ENCODE measurements at regions of chr5 and their contacts with region 1.

Region 1: GRCh38 chr5:64595031-64595855 is 89.4 kb downstream of the RGS7BP start:
- DNase-seq: peak; percentile 19
- H3K4me3 ChIP-seq: no peak overlapping the region
- H3K27ac ChIP-seq: no peak overlapping the region
- H3K4me1 ChIP-seq: no peaks in the 10 kb centered on the region
- H3K27me3 ChIP-seq: peaks cover 0 to 6% of the 10 kb centered on the region in 2 experiments
- CTCF ChIP-seq: peak; percentile 30 to 62
- POLR2A ChIP-seq: no peak

Region 2: DNA sequence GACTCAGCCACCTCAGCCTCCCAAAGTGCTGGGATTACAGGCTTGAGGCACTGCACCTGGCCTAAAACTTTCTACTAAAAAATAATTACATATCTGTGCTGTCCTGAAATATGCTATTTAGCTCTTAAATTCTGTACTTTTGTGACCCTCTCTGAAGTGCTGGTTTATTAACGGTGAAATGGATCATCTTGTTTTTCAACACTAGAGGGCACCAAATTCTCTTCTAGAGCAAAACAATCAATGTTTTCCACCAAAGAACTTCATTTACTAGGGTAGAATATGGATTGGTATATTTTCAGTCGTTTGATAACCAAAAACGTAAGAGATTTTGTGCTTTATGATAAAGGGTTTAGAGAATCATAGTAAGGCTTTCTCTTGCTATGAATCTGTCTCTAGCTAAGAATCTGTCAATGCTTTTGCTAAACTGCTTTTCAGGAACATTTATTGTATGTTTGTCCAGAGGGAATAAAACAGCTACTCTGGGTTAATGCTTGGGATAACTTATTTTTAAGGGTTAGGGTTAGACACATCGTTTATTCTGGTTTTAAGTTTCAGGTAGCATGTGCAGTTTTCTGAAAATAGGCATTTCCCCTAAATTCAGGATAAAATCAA is 366.0 kb before region 1 on chr5:
- CTCF ChIA-PET with region 1: interaction called, 12 read pairs
- POLR2A ChIA-PET with region 1: no interaction called
- dilution Hi-C with region 1: no loop called
- intact Hi-C with region 1: no loop called
- DNase-seq: peak; percentile 49
- H3K4me3 ChIP-seq: no peak overlapping the region
- H3K27ac ChIP-seq: no peak overlapping the region
- H3K4me1 ChIP-seq: no peaks in the 10 kb centered on the region
- H3K27me3 ChIP-seq: no peaks in the 10 kb centered on the region
- CTCF ChIP-seq: peak; percentile 24 to 41
- POLR2A ChIP-seq: no peak

Region 3: DNA sequence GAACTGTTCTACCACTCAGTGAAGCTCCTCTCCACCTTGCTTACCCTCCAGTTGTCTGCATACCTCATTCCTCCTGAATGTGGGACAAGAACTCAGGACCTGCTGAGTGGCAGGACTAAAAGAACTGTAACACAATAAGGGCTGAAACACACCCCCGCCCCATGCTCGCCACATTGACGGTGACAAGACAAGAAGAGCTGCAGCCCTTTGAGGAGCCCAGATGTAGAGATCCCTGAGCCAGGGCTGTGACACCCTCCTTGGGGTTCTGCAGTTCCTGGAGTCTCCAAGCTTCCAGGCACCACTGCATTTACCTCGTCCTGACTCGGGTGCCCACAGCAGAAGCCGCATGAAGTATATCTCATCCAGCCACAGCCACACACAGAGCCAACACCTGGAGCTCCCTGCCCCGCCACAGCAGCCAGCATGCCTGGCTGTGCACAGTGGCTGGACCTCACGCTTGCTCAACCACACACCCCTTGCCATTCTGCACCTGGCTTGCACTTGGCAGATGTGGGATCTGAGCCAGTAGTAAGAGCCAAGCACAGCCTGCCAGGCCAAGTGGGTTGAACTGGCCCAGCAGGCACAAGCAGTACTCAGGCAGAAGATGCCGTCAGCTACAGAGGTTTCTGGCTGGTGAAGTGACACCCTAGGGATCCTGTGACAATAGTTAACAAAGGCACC is 263.5 kb before region 1 on chr5:
- CTCF ChIA-PET with region 1: no interaction called
- POLR2A ChIA-PET with region 1: no interaction called
- dilution Hi-C with region 1: no loop called
- intact Hi-C with region 1: no loop called
- DNase-seq: no peak
- H3K4me3 ChIP-seq: no peak overlapping the region
- H3K27ac ChIP-seq: no peak overlapping the region
- H3K4me1 ChIP-seq: no peaks in the 10 kb centered on the region
- H3K27me3 ChIP-seq: no peaks in the 10 kb centered on the region
- CTCF ChIP-seq: no peak
- POLR2A ChIP-seq: no peak

Region 4: GRCh38 chr5:64347309-64347708 is 247.9 kb before region 1 on chr5:
- CTCF ChIA-PET with region 1: interaction called, 13 read pairs
- POLR2A ChIA-PET with region 1: no interaction called
- dilution Hi-C with region 1: no loop called
- intact Hi-C with region 1: no loop called
- DNase-seq: peak; percentile 14
- H3K4me3 ChIP-seq: no peak overlapping the region
- H3K27ac ChIP-seq: no peak overlapping the region
- H3K4me1 ChIP-seq: no peaks in the 10 kb centered on the region
- H3K27me3 ChIP-seq: no peaks in the 10 kb centered on the region
- CTCF ChIP-seq: no peak
- POLR2A ChIP-seq: no peak

Region 5: GRCh38 chr5:64384761-64385160 is 210.5 kb before region 1 on chr5:
- CTCF ChIA-PET with region 1: interaction called, 4 read pairs
- POLR2A ChIA-PET with region 1: no interaction called
- dilution Hi-C with region 1: no loop called
- intact Hi-C with region 1: loop called (anchors 5 kb)
- DNase-seq: peak; percentile 55
- H3K4me3 ChIP-seq: no peak overlapping the region
- H3K27ac ChIP-seq: no peak overlapping the region
- H3K4me1 ChIP-seq: no peaks in the 10 kb centered on the region
- H3K27me3 ChIP-seq: no peaks in the 10 kb centered on the region
- CTCF ChIP-seq: peak; percentile 29 to 41
- POLR2A ChIP-seq: no peak

Region 6: DNA sequence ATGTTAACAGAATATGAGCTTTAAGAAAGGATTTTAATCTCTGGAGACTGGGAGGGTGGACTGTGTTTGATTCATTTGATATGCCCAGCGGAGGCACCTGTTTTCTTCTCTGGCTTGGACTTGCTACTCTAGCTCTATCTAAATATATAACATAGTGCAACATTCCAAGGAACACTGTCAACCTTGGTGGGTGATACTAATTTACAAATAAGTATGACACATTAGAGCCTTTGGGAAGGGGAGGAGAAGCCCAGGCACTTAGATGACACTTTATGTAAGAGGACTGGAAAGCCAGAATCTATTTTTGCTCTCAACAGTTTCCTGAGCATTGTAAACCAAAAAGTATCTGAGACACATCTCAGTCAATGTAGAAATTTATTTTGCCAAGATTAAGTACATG is 11.7 kb after region 1 on chr5:
- CTCF ChIA-PET with region 1: interaction called, 18 read pairs
- POLR2A ChIA-PET with region 1: no interaction called
- dilution Hi-C with region 1: no loop called
- intact Hi-C with region 1: no loop called
- DNase-seq: no peak
- H3K4me3 ChIP-seq: no peak overlapping the region
- H3K27ac ChIP-seq: no peak overlapping the region
- H3K4me1 ChIP-seq: no peaks in the 10 kb centered on the region
- H3K27me3 ChIP-seq: peaks cover 4 to 18% of the 10 kb centered on the region in 2 experiments
- CTCF ChIP-seq: no peak
- POLR2A ChIP-seq: no peak

Measured in endothelial cell of umbilical vein (primary cell).